Cardiac septum (tissue), 1 donor: ENCODE measurements at regions of chr20 and their contacts with region 1.

Region 1: DNA sequence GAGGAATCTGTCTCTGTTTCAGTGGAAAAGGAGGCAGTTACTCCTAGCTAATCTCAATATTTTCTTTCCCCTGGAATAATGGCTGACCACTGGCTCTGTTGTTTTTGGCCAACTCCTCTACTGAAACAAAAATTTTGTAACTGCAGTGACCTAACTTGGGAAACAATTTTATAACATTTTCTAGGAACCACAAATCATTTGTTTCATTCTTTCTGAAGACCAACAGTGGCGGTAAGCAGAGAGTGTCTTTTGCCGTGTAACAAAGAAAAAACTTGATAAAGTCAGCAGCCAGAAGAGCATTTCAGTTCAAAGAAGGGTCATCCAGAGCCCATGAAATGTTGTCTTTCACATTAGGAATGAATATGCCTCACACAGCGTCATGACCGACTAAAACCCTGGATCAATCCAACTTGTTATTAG is 11.8 kb upstream of the BFSP1 start:
- DNase-seq: no peak

Region 2: DNA sequence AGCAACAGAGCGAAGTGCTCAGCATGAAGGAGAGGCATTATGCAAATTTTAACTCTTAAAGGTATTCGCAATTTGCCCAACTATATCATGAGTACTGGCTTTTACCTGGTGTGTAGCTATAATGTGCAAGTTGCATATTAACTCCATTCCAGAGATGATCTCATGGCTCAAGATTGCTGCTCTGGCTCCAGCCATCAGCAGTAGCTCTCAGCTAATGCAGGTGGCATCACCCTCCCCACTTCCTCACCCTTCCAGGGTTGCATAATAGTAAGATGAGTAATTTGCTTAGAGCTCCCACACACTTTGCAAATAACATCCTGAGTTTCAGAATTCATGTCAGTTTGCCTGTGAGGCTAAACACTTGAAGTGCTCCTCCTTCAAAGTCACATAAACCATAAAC is 332.0 kb before region 1 on chr20:
- intact Hi-C with region 1: no loop called
- DNase-seq: no peak

Region 3: GRCh38 chr20:17395729-17396128 is 147.3 kb before region 1 on chr20:
- intact Hi-C with region 1: no loop called
- DNase-seq: no peak

Region 4: GRCh38 chr20:17682103-17682888 is 139.3 kb after region 1 on chr20 and contains the start of gene RRBP1:
- intact Hi-C with region 1: loop called (anchors 5 kb)
- DNase-seq: peak; percentile 100
- total RNA-seq, gene RRBP1: 46.7 TPM